HepG2 (cell line): ENCODE measurements at regions of chr3 and their contacts with region 1.

Region 1: DNA sequence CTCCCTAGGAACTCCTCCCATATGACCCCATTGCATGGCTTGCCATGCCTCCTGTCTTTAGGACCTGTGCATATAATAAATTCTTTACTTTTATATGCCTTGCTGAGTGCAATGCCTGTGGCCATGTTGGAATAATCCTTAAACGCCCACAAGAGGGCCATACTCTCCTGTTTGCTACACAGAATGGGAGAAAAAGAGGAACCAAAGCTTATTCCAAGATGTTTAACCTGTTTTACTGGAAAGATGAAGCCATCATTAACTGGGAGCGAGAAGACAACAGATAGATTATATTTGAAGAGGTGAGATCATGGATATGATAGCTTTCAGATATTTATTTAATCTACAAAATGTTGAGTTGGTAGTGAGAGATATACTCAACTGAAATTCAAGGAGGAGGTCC is 1097.9 kb downstream of the NAALADL2 start:
- DNase-seq: no peak
- ATAC-seq: no peak
- H3K4me3 ChIP-seq: no peak overlapping the region
- H3K27ac ChIP-seq: no peak overlapping the region
- H3K4me1 ChIP-seq: no peaks in the 10 kb centered on the region
- H3K27me3 ChIP-seq: no peaks in the 10 kb centered on the region
- CTCF ChIP-seq: no peak
- EP300 ChIP-seq: no peak
- POLR2A ChIP-seq: no peak
- RAD21 ChIP-seq: no peak

Region 2: DNA sequence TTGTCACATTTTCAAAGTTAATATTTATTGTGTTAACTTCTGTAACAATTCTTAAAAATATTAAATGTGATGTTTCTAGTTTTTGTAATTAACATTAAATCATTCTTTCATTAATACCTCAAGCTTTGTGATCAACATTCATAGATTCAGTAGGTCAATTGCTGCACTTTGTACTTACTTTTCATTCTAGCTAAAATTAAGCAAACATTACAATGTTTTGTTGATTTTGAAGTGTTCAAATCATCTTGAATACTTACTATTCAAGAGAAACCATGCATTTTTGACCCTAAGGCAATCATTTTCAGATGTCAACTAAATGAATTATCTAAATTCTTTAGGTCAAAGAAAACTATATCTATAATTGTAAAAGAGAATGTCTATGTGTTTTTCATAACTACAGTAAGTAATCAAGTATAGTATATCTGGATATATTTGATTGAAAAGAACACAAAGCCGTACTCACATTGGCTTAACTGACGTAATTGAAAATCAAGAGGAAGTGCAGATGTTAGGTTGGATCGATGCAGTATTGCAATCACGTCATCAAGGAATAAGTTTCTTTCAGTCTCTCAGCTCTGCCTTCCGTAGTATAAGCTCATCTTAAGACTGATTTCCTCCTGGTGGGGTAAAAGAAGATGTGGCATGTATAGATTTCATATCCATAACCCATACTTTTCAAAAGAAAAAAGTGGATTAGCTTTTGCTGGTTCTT is 164.6 kb before region 1 on chr3:
- CTCF ChIA-PET with region 1: no interaction called
- POLR2A ChIA-PET with region 1: no interaction called
- in situ Hi-C with region 1: no loop called
- intact Hi-C with region 1: no loop called
- DNase-seq: no peak
- ATAC-seq: no peak
- H3K4me3 ChIP-seq: no peak overlapping the region
- H3K27ac ChIP-seq: no peak overlapping the region
- H3K4me1 ChIP-seq: no peaks in the 10 kb centered on the region
- H3K27me3 ChIP-seq: no peaks in the 10 kb centered on the region
- CTCF ChIP-seq: no peak
- EP300 ChIP-seq: no peak
- POLR2A ChIP-seq: no peak
- RAD21 ChIP-seq: no peak

Region 3: GRCh38 chr3:176430244-176431037 is 473.4 kb after region 1 on chr3:
- CTCF ChIA-PET with region 1: no interaction called
- POLR2A ChIA-PET with region 1: no interaction called
- in situ Hi-C with region 1: no loop called
- intact Hi-C with region 1: loop called (anchors 1 kb)
- DNase-seq: peak; percentile 8
- ATAC-seq: no peak
- H3K4me3 ChIP-seq: no peak overlapping the region
- H3K27ac ChIP-seq: no peak overlapping the region
- H3K4me1 ChIP-seq: no peaks in the 10 kb centered on the region
- H3K27me3 ChIP-seq: no peaks in the 10 kb centered on the region
- CTCF ChIP-seq: peak; percentile 44
- EP300 ChIP-seq: no peak
- POLR2A ChIP-seq: no peak
- RAD21 ChIP-seq: peak; percentile 29; the same call in 1 of the 2 replicates